ENCODE measurements at regions of chr1 and their contacts with region 1.

Region 1: DNA sequence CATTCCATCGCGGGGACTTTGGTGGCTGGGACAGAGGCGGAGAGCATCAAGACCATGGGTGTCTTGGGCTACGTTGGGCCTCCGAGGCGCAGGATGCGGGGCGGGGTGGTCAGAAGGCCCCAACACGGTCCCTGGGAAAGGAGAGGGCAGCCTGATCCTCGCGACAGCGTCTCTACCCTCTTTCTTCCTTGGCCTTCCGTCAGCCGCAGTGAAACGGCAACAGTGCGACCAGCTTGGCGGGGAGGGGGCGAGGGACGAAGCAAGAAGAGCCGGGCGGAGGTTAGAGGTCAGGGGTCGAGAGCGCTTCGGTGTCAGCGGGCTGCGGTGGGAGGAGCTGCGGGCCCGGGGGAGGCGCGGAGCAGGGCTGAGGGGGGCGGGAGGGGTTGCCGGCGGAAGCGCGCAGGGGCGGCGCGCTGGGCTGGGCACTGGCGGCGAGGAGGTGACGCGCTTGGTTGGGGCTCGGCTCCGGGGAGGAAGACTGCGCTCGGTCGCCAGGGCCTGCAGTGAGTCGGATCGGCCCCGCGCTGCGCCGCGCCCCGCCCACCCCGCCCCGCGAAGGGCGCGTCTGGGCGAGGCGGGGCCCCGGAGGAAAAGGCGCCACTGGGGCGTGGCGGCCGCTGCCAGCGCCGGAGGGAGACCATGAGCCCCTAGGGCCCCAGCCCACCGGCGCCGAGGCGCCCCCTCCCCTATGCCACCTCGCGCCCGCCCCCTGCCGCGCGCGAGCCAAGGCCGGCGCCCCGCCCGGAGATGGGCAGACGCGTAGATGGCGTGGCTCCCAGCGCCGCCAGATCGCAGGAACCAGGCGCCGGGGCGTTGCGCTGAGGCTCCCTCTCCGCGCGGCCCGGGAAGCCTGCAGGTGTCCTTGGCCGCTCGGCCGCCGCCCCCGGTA is at the start of gene KCNC4:
- DNase-seq: peak; percentile 70 to 73
- ATAC-seq: peak; percentile 65 to 67
- H3K4me3 ChIP-seq: peak within 1 kb of the TSS; percentile 57 to 88 (median 68)
- H3K27ac ChIP-seq: peak within 1 kb of the TSS; percentile 75 to 85 (median 84)
- H3K4me1 ChIP-seq: peaks cover 5 to 7% of the 10 kb centered on the region in 2 donors
- H3K27me3 ChIP-seq: peaks cover 7 to 17% (median 14%) of the 10 kb centered on the region in 3 donors
- CTCF ChIP-seq: peak in 1 of 5 experiments; percentile 5
- POLR2A ChIP-seq: peak; percentile 36 to 54
- total RNA-seq, gene KCNC4: 3.1 to 9.1 (median 4.1) TPM

Region 2: GRCh38 chr1:110245876-110246620 is 36.1 kb after region 1 on chr1:
- in situ Hi-C with region 1: no loop called
- intact Hi-C with region 1: no loop called
- DNase-seq: no peak
- ATAC-seq: no peak
- H3K4me3 ChIP-seq: no peak overlapping the region
- H3K27ac ChIP-seq: no peak overlapping the region
- H3K4me1 ChIP-seq: no peaks in the 10 kb centered on the region
- H3K27me3 ChIP-seq: peaks cover 0 to 5% (median 0%) of the 10 kb centered on the region in 3 donors
- CTCF ChIP-seq: no peak
- POLR2A ChIP-seq: no peak

Region 3: DNA sequence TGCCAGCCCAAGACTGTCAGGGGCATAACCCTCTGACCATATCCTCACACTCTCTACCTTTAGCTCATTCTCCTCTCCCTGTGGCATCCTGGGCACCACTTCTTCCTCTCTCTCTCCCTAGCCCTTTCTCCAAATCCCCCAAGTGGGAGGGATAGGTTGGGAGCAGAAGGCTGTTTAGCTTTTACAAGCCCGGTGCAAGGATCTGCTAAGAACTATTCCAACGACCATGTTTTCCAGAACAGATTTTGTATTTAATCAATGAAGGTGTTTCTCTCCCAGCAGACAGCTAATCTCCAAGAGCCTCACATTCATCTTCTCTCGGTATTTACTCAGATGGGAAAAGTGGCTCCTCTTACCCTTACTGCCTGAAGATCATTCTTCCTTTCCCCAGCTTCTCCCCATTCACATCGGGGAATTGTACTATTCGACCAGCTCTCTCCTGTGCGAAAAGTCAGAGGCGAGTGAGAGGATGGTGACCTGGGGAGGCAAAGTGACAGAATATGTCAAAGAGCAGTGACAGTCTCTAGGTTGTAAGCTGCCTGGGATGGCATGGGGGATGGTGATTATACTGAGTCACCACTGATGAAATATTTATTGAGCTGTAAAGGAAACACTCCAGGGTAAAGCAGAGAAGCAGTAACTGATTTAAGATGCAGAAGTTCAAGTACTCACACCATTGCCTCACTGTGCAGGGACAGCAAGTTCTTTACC is 82.2 kb after region 1 on chr1:
- in situ Hi-C with region 1: no loop called
- intact Hi-C with region 1: no loop called
- DNase-seq: no peak
- ATAC-seq: peak in 1 of 2 donors; percentile 73
- H3K4me3 ChIP-seq: no peak overlapping the region
- H3K27ac ChIP-seq: no peak overlapping the region
- H3K4me1 ChIP-seq: no peaks in the 10 kb centered on the region
- H3K27me3 ChIP-seq: no peaks in the 10 kb centered on the region
- CTCF ChIP-seq: no peak
- POLR2A ChIP-seq: no peak

Region 4: DNA sequence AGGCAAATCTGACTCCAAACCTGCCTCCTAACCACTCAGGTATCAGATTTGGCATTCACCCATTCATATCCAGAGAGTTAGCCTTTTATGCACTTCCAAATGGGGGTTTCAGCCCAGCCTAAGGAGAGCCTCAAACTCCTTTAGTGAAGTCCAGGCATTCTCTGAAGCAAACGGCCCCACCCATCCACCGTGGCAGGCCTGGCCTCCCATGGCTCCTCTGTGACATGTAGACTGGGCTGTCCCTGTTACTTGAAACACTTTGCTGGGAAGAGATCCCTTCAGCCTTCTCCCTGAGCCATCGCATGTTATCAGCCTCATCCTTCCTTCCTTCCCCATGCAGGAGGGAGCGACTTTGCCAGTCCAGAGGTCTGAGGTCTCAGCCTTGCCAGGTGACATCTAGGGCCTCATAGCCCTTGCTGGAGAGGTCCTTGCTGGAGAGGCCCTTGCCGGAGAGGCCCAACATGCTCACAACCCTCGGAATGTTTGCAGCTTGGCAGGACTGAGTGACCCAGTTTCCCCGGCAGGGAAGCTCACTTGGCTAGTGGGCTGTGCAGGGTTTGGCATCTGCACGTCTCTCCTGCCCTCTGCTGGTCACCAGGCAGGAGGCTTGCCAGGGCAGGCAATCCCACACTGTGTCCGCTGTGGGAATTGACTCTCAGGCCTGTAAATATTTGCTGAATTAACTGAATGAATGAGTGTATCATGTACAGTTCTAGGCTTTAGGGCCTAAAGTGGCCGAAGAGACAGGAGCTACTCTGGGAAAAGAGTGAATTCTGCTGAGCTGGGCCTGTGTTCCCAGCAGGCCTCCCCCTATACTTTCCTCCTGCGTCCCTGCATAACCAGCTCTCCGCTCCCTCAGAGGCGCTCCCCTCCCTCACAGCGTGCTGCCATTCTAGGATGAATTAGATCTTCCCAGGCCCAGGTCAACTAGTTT is 102.5 kb after region 1 on chr1:
- in situ Hi-C with region 1: no loop called
- intact Hi-C with region 1: loop called (anchors 1 kb)
- DNase-seq: peak; percentile 58 to 66
- ATAC-seq: peak; percentile 92 to 95
- H3K4me3 ChIP-seq: no peak overlapping the region
- H3K27ac ChIP-seq: no peak overlapping the region
- H3K4me1 ChIP-seq: peaks cover 4 to 5% of the 10 kb centered on the region in 2 donors
- H3K27me3 ChIP-seq: no peaks in the 10 kb centered on the region
- CTCF ChIP-seq: peak; percentile 76 to 95 (median 90)
- POLR2A ChIP-seq: no peak

Region 5: GRCh38 chr1:110407260-110408210 is 197.6 kb after region 1 on chr1 and contains the start of gene LAMTOR5:
- in situ Hi-C with region 1: no loop called
- intact Hi-C with region 1: loop called (anchors 5 kb)
- DNase-seq: peak; percentile 93 to 95
- ATAC-seq: peak; percentile 96 to 98
- H3K4me3 ChIP-seq: peak within 1 kb of the TSS; percentile 78 to 98 (median 91)
- H3K27ac ChIP-seq: peak within 1 kb of the TSS; percentile 92 to 99 (median 95)
- H3K4me1 ChIP-seq: peaks cover 32% of the 10 kb centered on the region in 2 donors
- H3K27me3 ChIP-seq: no peaks in the 10 kb centered on the region
- CTCF ChIP-seq: peak in 2 of 5 experiments; percentile 4 to 18
- POLR2A ChIP-seq: peak; percentile 93 to 94
- total RNA-seq, gene LAMTOR5: 116 to 203 (median 153) TPM

Region 6: GRCh38 chr1:110495926-110496600 is 286.1 kb after region 1 on chr1:
- in situ Hi-C with region 1: loop called in 1 of 4 experiments (anchors 10 kb)
- intact Hi-C with region 1: no loop called
- DNase-seq: peak; percentile 53 to 58
- ATAC-seq: peak; percentile 80 to 92
- H3K4me3 ChIP-seq: no peak overlapping the region
- H3K27ac ChIP-seq: no peak overlapping the region
- H3K4me1 ChIP-seq: no peaks in the 10 kb centered on the region
- H3K27me3 ChIP-seq: no peaks in the 10 kb centered on the region
- CTCF ChIP-seq: peak; percentile 70 to 93 (median 81)
- POLR2A ChIP-seq: no peak